Posterior cingulate gyrus (tissue), 11 donors: ENCODE measurements at regions of chr14 and their contacts with region 1.

Region 1: GRCh38 chr14:22929848-22930364 is 730 bp upstream of the PRMT5 start:
- DNase-seq: no peak

Region 2: DNA sequence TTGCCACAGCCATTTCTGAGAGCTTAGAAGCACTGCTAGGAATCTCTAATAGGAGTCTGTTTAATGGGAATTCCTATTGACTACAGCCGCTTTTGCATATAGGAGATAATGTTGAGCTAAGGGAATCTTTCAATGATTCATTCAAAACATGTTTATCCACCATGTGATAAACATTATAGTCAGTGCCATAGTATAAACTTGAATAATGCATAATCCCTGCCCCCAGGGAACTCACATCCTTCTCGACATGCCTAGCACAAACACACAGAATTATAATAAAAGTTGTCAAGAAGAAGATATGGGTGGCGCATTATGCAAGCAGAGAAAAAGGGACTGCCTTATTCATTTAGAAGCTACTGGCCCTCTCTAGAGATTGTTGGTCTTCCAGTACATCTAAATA is 588.9 kb before region 1 on chr14:
- intact Hi-C with region 1: no loop called
- DNase-seq: no peak

Region 3: DNA sequence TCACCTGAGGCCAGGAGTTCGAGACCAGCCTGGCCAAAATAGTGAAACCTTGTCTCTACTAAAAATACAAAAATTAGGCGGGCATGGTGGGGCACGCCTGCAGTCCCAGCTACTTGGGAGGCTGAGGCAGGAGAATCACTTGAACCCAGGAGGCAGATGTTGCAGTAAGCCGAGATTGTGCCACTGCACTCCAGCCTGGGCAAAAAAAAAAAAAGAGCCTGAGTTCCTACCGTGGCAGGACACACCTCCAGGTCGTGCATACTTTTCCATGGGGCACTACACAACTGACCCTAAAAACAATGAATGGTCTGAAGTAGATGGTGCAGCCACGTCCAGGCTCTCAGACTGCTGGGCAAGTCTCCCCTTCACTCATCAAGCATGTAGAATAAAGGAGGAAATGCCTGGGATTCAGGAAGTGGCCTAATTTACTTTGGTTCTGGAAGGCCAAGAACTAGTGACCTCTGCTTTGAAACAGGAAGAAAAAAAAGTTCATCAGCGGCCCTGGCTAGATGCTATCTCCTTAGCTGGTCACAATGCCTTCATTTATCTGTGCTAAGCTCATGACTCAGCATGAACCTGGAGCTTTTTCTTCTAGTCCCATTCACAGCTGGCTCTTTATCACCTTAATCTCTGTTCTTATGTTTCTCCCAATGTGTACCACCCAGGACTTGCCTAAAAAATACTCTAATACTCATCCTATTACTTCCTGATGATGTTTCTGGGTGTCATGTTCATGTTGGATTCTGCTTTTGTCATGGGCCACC is 229.9 kb before region 1 on chr14:
- intact Hi-C with region 1: no loop called
- DNase-seq: no peak

Region 4: GRCh38 chr14:22986508-22987054 is 56.7 kb after region 1 on chr14:
- intact Hi-C with region 1: loop called (anchors 10 kb)
- DNase-seq: peak; percentile 78 to 99 (median 94)

Region 5: DNA sequence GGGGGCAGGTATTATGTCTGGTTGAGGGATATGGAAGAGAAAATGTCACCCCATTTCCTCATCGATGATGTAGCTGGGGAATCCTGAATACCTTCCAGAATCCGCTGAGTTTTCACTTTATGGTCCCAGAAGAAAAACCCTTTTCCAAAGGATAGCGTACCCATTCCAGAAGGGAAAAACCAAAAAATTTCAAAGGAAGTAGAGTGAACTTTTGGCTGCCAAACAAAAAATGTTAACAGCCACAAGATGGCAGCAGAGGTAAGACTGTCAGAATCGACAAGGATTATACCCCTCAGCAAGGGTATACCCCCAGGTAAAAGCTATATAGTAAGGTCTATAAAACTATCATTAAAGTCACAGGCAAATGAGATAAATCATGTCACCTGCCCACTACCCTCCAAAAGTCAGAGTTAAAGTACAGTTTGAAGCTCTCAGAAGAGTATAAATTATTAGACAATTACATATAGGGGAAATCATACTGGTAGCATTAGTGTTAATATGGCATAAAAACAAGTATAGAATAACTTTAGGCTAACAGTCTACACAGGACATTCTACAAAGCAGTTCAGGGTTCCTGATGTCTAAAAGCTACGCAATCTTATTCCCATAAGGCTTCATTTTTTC is 147.0 kb after region 1 on chr14:
- intact Hi-C with region 1: no loop called
- DNase-seq: no peak

Region 6: GRCh38 chr14:23275412-23275811 is 345.5 kb after region 1 on chr14:
- intact Hi-C with region 1: no loop called
- DNase-seq: no peak